H1 (cell line): ENCODE measurements at regions of chr17 and their contacts with region 1.

Region 1: GRCh38 chr17:76088036-76088867 is 9.3 kb downstream of the ZACN start:
- DNase-seq: peak in 1 of 2 experiments; percentile 72
- H3K4me3 ChIP-seq: no peak overlapping the region
- H3K27ac ChIP-seq: no peak overlapping the region
- H3K4me1 ChIP-seq: no peaks in the 10 kb centered on the region
- H3K27me3 ChIP-seq: no peaks in the 10 kb centered on the region
- CTCF ChIP-seq: peak; percentile 60 to 74 (median 63)
- EP300 ChIP-seq: no peak
- POLR2A ChIP-seq: no peak
- RAD21 ChIP-seq: peak; percentile 40 to 56

Region 2: DNA sequence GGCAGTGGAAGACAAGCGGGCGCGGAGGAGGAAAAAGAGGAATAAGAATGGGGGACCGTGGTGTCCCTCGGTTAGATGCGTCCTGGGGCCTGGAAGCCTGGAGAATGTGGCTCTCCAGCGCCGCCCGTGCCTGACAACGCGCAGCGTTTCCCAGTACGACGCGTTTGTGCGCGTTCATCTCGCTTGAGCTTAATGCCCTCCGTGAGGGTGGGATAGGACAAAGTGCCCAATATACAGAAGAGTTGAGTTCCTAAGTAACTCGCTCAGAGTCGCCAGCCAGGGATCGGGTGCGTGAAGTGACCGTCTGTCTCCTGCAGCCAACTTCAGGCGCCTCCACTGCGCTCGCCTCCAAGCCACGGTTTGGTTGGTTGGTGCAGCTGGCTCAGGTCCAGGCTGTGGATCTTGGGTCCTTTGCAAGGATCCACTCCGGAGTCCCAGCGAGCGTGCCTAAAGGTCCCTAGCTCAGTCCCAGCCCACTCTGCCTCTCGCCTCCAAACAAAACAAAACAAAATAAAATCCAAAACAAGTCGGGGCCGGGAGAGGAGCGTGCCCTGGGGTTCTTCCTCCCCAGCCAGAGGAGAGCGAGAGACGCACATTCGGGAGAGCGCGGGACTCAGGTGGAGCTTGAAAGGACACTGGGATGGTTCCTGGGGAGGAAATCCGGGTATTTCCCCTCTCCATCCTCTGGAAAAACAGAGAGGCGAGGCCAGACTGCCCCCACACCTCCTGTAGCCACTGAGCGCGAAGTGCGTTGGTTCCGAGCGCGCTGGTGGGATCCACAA is 12.7 kb before region 1 on chr17:
- CTCF ChIA-PET with region 1: interaction called, 10 read pairs
- POLR2A ChIA-PET with region 1: interaction called, 28 read pairs
- DNase-seq: peak in 1 of 2 experiments; percentile 81
- H3K4me3 ChIP-seq: peak overlapping the region; percentile 21 to 60 (median 40); a peak in 5 of 8 replicates
- H3K27ac ChIP-seq: no peak overlapping the region
- H3K4me1 ChIP-seq: peaks cover 0 to 54% (median 36%) of the 10 kb centered on the region in 4 experiments; a peak in 6 of 7 replicates
- H3K27me3 ChIP-seq: peaks cover 54 to 72% (median 68%) of the 10 kb centered on the region in 4 experiments
- CTCF ChIP-seq: peak; percentile 31 to 75 (median 68)
- EP300 ChIP-seq: no peak
- POLR2A ChIP-seq: no peak
- RAD21 ChIP-seq: peak; percentile 33 to 40; a peak in 3 of 4 replicates